Activated CD4-positive, alpha-beta T cell treated with anti-CD3 and anti-CD28 coated beads for 36 hours (primary cell): ENCODE measurements at regions of chr1 and their contacts with region 1.

Region 1: GRCh38 chr1:78072216-78072615 is 26.4 kb downstream of the GIPC2 start:
- DNase-seq: no peak
- ATAC-seq: no peak
- H3K4me3 Mint-ChIP-seq: no peak overlapping the region
- H3K27ac Mint-ChIP-seq: no peak overlapping the region
- H3K4me1 Mint-ChIP-seq: peaks cover 3% of the 10 kb centered on the region
- H3K27me3 Mint-ChIP-seq: peaks cover 9% of the 10 kb centered on the region

Region 2: GRCh38 chr1:77986810-77987209 is 85.4 kb before region 1 on chr1:
- CTCF ChIA-PET with region 1: no interaction called
- POLR2A ChIA-PET with region 1: no interaction called
- intact Hi-C with region 1: no loop called
- DNase-seq: peak; percentile 43
- ATAC-seq: peak; percentile 85
- H3K4me3 Mint-ChIP-seq: no peak overlapping the region
- H3K27ac Mint-ChIP-seq: no peak overlapping the region
- H3K4me1 Mint-ChIP-seq: peaks cover 55% of the 10 kb centered on the region
- H3K27me3 Mint-ChIP-seq: no peaks in the 10 kb centered on the region

Region 3: DNA sequence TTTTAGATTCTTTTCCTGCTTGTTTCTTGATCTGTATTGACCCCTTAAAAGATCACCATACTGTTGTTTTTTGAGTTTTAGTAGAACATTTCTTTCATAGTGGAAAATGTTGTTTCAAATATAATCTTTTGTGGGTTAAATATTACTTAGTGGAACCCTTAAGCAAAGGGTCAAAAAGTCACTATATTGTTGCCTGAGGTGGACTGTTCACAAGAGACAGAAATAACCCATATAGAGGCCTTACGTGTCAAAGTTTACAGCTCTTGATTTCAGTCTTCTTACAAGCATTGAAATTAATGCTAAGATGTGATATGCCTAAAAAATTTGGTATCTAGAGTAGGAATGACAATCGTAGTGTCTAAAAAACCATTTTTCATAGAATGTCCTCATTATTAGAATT is 61.2 kb before region 1 on chr1:
- CTCF ChIA-PET with region 1: no interaction called
- POLR2A ChIA-PET with region 1: no interaction called
- intact Hi-C with region 1: no loop called
- DNase-seq: no peak
- ATAC-seq: no peak
- H3K4me3 Mint-ChIP-seq: no peak overlapping the region
- H3K27ac Mint-ChIP-seq: no peak overlapping the region
- H3K4me1 Mint-ChIP-seq: peaks cover 26% of the 10 kb centered on the region
- H3K27me3 Mint-ChIP-seq: no peaks in the 10 kb centered on the region

Region 4: GRCh38 chr1:78101514-78101913 is 29.3 kb after region 1 on chr1:
- CTCF ChIA-PET with region 1: no interaction called
- POLR2A ChIA-PET with region 1: no interaction called
- intact Hi-C with region 1: loop called in 1 of 2 experiments (anchors 2 kb)
- DNase-seq: no peak
- ATAC-seq: no peak
- H3K4me3 Mint-ChIP-seq: no peak overlapping the region
- H3K27ac Mint-ChIP-seq: no peak overlapping the region
- H3K4me1 Mint-ChIP-seq: no peaks in the 10 kb centered on the region
- H3K27me3 Mint-ChIP-seq: peaks cover 4% of the 10 kb centered on the region